ENCODE measurements at regions of chr2 and their contacts with region 1.

Region 1: DNA sequence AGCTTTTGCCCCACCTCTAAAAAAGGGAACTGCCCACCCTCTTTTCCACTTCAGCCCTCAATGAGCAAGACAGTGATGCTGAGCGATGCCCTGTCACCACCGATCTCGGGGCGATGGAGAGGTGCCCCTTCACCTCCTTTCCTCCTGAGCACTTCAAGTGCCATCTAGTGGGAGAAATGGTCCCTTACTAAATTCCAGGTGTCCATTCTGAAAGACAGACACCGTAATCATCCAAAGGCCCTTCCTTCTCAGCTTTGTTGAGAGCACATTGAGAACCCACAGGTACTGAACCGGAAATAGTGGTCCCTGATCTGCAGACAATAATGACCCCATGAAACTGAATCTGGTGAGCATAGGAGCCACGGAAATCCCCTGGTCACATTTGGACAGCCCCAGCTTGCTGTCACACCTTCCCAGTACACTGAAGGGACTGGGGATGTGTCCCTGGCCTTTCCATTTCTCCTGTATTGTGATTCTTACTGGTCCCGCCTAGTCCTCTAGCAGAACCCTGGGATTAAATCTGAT is 38.5 kb downstream of the KCTD18 start:
- DNase-seq: peak; percentile 37 to 44 (median 40)
- H3K4me3 ChIP-seq: no peak overlapping the region
- H3K4me3 Mint-ChIP-seq: peak overlapping the region in 4 of 8 donors; percentile 47 to 84 (median 75)
- H3K27ac ChIP-seq: no peak overlapping the region
- H3K27ac Mint-ChIP-seq: peak overlapping the region in 5 of 7 donors; percentile 33 to 95 (median 88)
- H3K4me1 ChIP-seq: peaks cover 31% of the 10 kb centered on the region
- H3K4me1 Mint-ChIP-seq: peaks cover 28 to 37% (median 36%) of the 10 kb centered on the region in 4 donors
- H3K27me3 ChIP-seq: no peaks in the 10 kb centered on the region
- H3K27me3 Mint-ChIP-seq: no peaks in the 10 kb centered on the region

Region 2: GRCh38 chr2:199985625-199986207 is 485.7 kb before region 1 on chr2:
- CTCF ChIA-PET with region 1: interaction called, 32 read pairs
- POLR2A ChIA-PET with region 1: interaction called, 4 read pairs
- intact Hi-C with region 1: loop called (anchors 1 kb)
- DNase-seq: peak; percentile 42 to 58 (median 50)
- H3K4me3 ChIP-seq: no peak overlapping the region
- H3K4me3 Mint-ChIP-seq: no peak overlapping the region
- H3K27ac ChIP-seq: no peak overlapping the region
- H3K27ac Mint-ChIP-seq: no peak overlapping the region
- H3K4me1 ChIP-seq: no peaks in the 10 kb centered on the region
- H3K4me1 Mint-ChIP-seq: peaks cover 0 to 9% (median 5%) of the 10 kb centered on the region in 4 donors
- H3K27me3 ChIP-seq: no peaks in the 10 kb centered on the region
- H3K27me3 Mint-ChIP-seq: no peaks in the 10 kb centered on the region

Region 3: GRCh38 chr2:200373973-200374416 is 97.4 kb before region 1 on chr2:
- CTCF ChIA-PET with region 1: interaction called, 11 read pairs
- POLR2A ChIA-PET with region 1: interaction called, 39 read pairs
- intact Hi-C with region 1: loop called (anchors 2 kb)
- DNase-seq: peak; percentile 52 to 62 (median 58)
- H3K4me3 ChIP-seq: peak overlapping the region; percentile 31 to 34
- H3K4me3 Mint-ChIP-seq: peak overlapping the region; percentile 82 to 93 (median 86)
- H3K27ac ChIP-seq: peak overlapping the region; percentile 48
- H3K27ac Mint-ChIP-seq: peak overlapping the region; percentile 75 to 96 (median 94)
- H3K4me1 ChIP-seq: peaks cover 47% of the 10 kb centered on the region
- H3K4me1 Mint-ChIP-seq: peaks cover 28 to 55% (median 43%) of the 10 kb centered on the region in 4 donors
- H3K27me3 ChIP-seq: no peaks in the 10 kb centered on the region
- H3K27me3 Mint-ChIP-seq: no peaks in the 10 kb centered on the region

Region 4: GRCh38 chr2:200454927-200455801 is 16.2 kb before region 1 on chr2:
- CTCF ChIA-PET with region 1: interaction called, 11 read pairs
- POLR2A ChIA-PET with region 1: interaction called, 5 read pairs
- intact Hi-C with region 1: no loop called
- DNase-seq: no peak
- H3K4me3 ChIP-seq: no peak overlapping the region
- H3K4me3 Mint-ChIP-seq: peak overlapping the region in 3 of 8 donors; percentile 13 to 30 (median 15)
- H3K27ac ChIP-seq: no peak overlapping the region
- H3K27ac Mint-ChIP-seq: no peak overlapping the region
- H3K4me1 ChIP-seq: peaks cover 21% of the 10 kb centered on the region
- H3K4me1 Mint-ChIP-seq: peaks cover 6 to 22% (median 12%) of the 10 kb centered on the region in 4 donors
- H3K27me3 ChIP-seq: no peaks in the 10 kb centered on the region
- H3K27me3 Mint-ChIP-seq: no peaks in the 10 kb centered on the region

Region 5: GRCh38 chr2:200525882-200526651 is 54.7 kb after region 1 on chr2 and contains the start of gene SGO2:
- CTCF ChIA-PET with region 1: no interaction called
- POLR2A ChIA-PET with region 1: interaction called, 10 read pairs
- intact Hi-C with region 1: no loop called
- DNase-seq: peak; percentile 93 to 97 (median 95)
- H3K4me3 ChIP-seq: peak within 1 kb of the TSS; percentile 82 to 98
- H3K4me3 Mint-ChIP-seq: peak within 1 kb of the TSS; percentile 91 to 97 (median 93)
- H3K27ac ChIP-seq: peak within 1 kb of the TSS; percentile 55
- H3K27ac Mint-ChIP-seq: peak within 1 kb of the TSS; percentile 83 to 93 (median 85)
- H3K4me1 ChIP-seq: peaks cover 14% of the 10 kb centered on the region
- H3K4me1 Mint-ChIP-seq: peaks cover 6 to 15% (median 12%) of the 10 kb centered on the region in 4 donors
- H3K27me3 ChIP-seq: no peaks in the 10 kb centered on the region
- H3K27me3 Mint-ChIP-seq: no peaks in the 10 kb centered on the region
- total RNA-seq, gene SGO2: 4.4 to 4.8 TPM

Region 6: GRCh38 chr2:200765139-200765951 is 294.0 kb after region 1 on chr2:
- CTCF ChIA-PET with region 1: no interaction called
- POLR2A ChIA-PET with region 1: no interaction called
- intact Hi-C with region 1: no loop called
- DNase-seq: peak in 1 of 5 donors; percentile 56
- H3K4me3 ChIP-seq: no peak overlapping the region
- H3K4me3 Mint-ChIP-seq: no peak overlapping the region
- H3K27ac ChIP-seq: no peak overlapping the region
- H3K27ac Mint-ChIP-seq: no peak overlapping the region
- H3K4me1 ChIP-seq: no peaks in the 10 kb centered on the region
- H3K4me1 Mint-ChIP-seq: peaks cover 0 to 5% (median under 1%) of the 10 kb centered on the region in 4 donors
- H3K27me3 ChIP-seq: no peaks in the 10 kb centered on the region
- H3K27me3 Mint-ChIP-seq: peaks cover 3 to 4% of the 10 kb centered on the region in 2 donors